Posterior cingulate gyrus (tissue), 11 donors: ENCODE measurements at regions of chr6 and their contacts with region 1.

Region 1: GRCh38 chr6:146041282-146041681 is 12.4 kb downstream of the GRM1 start:
- DNase-seq: no peak

Region 2: DNA sequence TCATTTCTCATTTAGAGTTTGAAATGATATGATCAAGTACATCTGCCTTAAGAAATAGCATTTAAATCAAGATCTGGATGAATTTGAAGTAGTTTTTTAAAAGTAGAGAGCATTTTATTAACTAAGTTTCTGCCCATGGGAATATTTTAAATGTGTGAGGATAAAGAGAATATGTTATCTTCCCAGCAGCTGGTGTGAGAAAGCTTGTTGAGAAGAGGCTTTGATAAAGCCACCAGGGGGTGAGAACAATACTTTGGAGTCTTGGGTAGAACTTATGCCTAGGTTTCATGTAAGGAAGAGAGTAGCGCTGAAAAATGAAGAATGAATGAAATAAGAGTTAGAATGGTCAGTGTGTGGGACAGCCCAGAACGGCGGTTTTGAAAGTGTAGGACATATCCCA is 177.8 kb after region 1 on chr6:
- intact Hi-C with region 1: loop called (anchors 5 kb)
- DNase-seq: no peak